Activated T-helper 1 cell treated with anti-CD3 and anti-CD28 coated beads, Interleukin-12 subunit alpha, Interleukin-12 subunit beta, Interleukin-2, Interleukin-4 antibody, amounts not matched to agents 30 ng/mL and 10 ng/mL and 1 ng/mL, durations not matched to agents 14 hours and 24 hours and 36 hours (primary cell): ENCODE measurements at regions of chr2 and their contacts with region 1.

Region 1: GRCh38 chr2:97849881-97850528 is 136.6 kb downstream of the ZAP70 start:
- DNase-seq: no peak
- H3K4me3 Mint-ChIP-seq: peak overlapping the region; percentile 0
- H3K27ac Mint-ChIP-seq: peak overlapping the region; percentile 32
- H3K4me1 Mint-ChIP-seq: peaks cover 44% of the 10 kb centered on the region
- H3K27me3 Mint-ChIP-seq: no peaks in the 10 kb centered on the region

Region 2: DNA sequence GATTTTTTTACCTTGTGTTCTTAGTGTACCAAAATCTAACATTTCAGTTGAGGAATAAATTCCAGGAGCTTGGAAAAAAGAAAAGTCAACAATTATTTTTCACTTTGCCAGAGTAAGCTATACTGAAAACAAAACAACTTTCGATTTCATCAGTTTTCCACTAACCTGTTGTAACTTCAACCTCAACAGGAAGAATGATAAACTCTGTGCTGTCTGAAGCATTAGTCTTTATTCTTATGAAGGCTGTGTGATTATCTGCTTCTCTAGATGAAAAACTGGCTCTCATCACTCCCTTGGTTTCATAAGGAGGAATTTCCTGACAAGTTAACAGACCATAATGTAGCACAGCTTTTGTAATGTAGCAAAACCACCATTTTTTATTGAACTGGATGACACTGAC is 15.4 kb before region 1 on chr2:
- intact Hi-C with region 1: loop called (anchors 1 kb)
- DNase-seq: no peak
- H3K4me3 Mint-ChIP-seq: no peak overlapping the region
- H3K27ac Mint-ChIP-seq: no peak overlapping the region
- H3K4me1 Mint-ChIP-seq: peaks cover 17% of the 10 kb centered on the region
- H3K27me3 Mint-ChIP-seq: no peaks in the 10 kb centered on the region

Region 3: GRCh38 chr2:97870396-97870843 is 20.4 kb after region 1 on chr2:
- intact Hi-C with region 1: loop called (anchors 1 kb)
- DNase-seq: peak; percentile 62
- H3K4me3 Mint-ChIP-seq: peak overlapping the region; percentile 1
- H3K27ac Mint-ChIP-seq: peak overlapping the region; percentile 60
- H3K4me1 Mint-ChIP-seq: peaks cover 35% of the 10 kb centered on the region
- H3K27me3 Mint-ChIP-seq: no peaks in the 10 kb centered on the region

Region 4: GRCh38 chr2:98026927-98027522 is 177.0 kb after region 1 on chr2:
- intact Hi-C with region 1: no loop called
- DNase-seq: no peak
- H3K4me3 Mint-ChIP-seq: peak overlapping the region; percentile 31
- H3K27ac Mint-ChIP-seq: peak overlapping the region; percentile 42
- H3K4me1 Mint-ChIP-seq: peaks cover 25% of the 10 kb centered on the region
- H3K27me3 Mint-ChIP-seq: peaks cover 2% of the 10 kb centered on the region